ENCODE measurements at regions of chr18 and their contacts with region 1.

Region 1: DNA sequence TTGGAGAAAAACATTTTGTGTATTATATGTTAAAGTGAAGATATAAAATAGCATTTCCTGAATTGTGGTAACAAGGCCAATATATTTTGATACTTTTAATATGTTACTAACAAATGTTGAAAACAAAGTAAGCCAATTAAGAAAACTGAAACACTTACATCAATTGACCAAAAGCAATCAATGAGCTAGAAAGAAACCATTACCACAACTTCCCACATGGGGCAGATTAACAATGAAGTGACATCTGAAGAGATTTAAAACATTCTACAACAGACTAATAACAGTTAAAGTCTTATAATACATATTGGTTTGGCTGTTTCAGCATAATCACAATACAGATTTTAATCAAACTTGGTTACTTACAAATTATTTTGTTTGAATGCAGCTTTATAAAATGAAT is 282.4 kb upstream of the NETO1 start:
- DNase-seq: no peak
- H3K4me3 ChIP-seq: no peak overlapping the region
- H3K27ac ChIP-seq: no peak overlapping the region
- H3K4me1 ChIP-seq: no peaks in the 10 kb centered on the region
- H3K27me3 ChIP-seq: no peaks in the 10 kb centered on the region
- CTCF ChIP-seq: peak in 1 of 3 experiments; percentile 25; a peak in 1 of 4 replicates
- EP300 ChIP-seq: no peak
- POLR2A ChIP-seq: no peak
- RAD21 ChIP-seq: peak in 1 of 2 experiments; percentile 17; a peak in 2 of 4 replicates

Region 2: DNA sequence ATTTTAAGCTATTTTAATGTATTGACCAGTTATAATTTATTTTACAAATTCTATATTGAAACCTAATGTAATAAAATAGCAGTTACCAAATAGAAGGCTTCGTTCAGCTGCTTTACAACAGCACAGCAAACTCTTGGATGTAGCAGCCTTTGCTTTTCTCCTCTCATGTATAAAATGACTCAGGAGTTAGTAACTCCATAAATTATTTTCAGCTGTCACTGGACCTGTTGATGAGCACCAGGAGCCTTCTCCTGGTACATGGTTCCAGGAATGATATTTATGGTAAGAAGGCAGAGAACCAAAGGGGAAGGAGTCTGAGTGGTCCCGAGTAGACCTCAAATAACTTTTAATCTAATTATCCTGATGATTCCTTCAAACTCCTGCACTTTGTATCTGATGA is 26.0 kb before region 1 on chr18:
- CTCF ChIA-PET with region 1: interaction called, 10 read pairs
- POLR2A ChIA-PET with region 1: no interaction called
- DNase-seq: no peak
- H3K4me3 ChIP-seq: no peak overlapping the region
- H3K27ac ChIP-seq: no peak overlapping the region
- H3K4me1 ChIP-seq: no peaks in the 10 kb centered on the region
- H3K27me3 ChIP-seq: no peaks in the 10 kb centered on the region
- CTCF ChIP-seq: no peak
- EP300 ChIP-seq: no peak
- POLR2A ChIP-seq: no peak
- RAD21 ChIP-seq: no peak

Region 3: GRCh38 chr18:73136134-73136533 is 14.1 kb before region 1 on chr18:
- CTCF ChIA-PET with region 1: interaction called, 17 read pairs
- POLR2A ChIA-PET with region 1: no interaction called
- DNase-seq: no peak
- H3K4me3 ChIP-seq: no peak overlapping the region
- H3K27ac ChIP-seq: no peak overlapping the region
- H3K4me1 ChIP-seq: no peaks in the 10 kb centered on the region
- H3K27me3 ChIP-seq: peaks cover 0 to 1% (median 0%) of the 10 kb centered on the region in 4 experiments; a peak in 1 of 7 replicates
- CTCF ChIP-seq: peak in 2 of 3 experiments; percentile 26 to 44; a peak in 2 of 4 replicates
- EP300 ChIP-seq: no peak
- POLR2A ChIP-seq: no peak
- RAD21 ChIP-seq: peak in 1 of 2 experiments; percentile 50; a peak in 3 of 4 replicates

Region 4: GRCh38 chr18:73212442-73212841 is 62.2 kb after region 1 on chr18:
- CTCF ChIA-PET with region 1: no interaction called
- POLR2A ChIA-PET with region 1: no interaction called
- DNase-seq: no peak
- H3K4me3 ChIP-seq: no peak overlapping the region
- H3K27ac ChIP-seq: no peak overlapping the region
- H3K4me1 ChIP-seq: no peaks in the 10 kb centered on the region
- H3K27me3 ChIP-seq: no peaks in the 10 kb centered on the region
- CTCF ChIP-seq: no peak
- EP300 ChIP-seq: no peak
- POLR2A ChIP-seq: no peak
- RAD21 ChIP-seq: no peak

Region 5: GRCh38 chr18:73340135-73340934 is 190.1 kb after region 1 on chr18:
- CTCF ChIA-PET with region 1: no interaction called
- POLR2A ChIA-PET with region 1: no interaction called
- DNase-seq: no peak
- H3K4me3 ChIP-seq: no peak overlapping the region
- H3K27ac ChIP-seq: no peak overlapping the region
- H3K4me1 ChIP-seq: no peaks in the 10 kb centered on the region
- H3K27me3 ChIP-seq: no peaks in the 10 kb centered on the region
- CTCF ChIP-seq: no peak
- EP300 ChIP-seq: no peak
- POLR2A ChIP-seq: no peak
- RAD21 ChIP-seq: no peak